Activated T-helper 1 cell treated with anti-CD3 and anti-CD28 coated beads, Interleukin-12 subunit alpha, Interleukin-12 subunit beta, Interleukin-2, Interleukin-4 antibody, amounts not matched to agents 30 ng/mL and 10 ng/mL and 1 ng/mL, durations not matched to agents 14 hours and 24 hours and 36 hours (primary cell): ENCODE measurements at regions of chr9 and their contacts with region 1.

Region 1: GRCh38 chr9:4740638-4741364 is at the start of gene AK3:
- DNase-seq: peak; percentile 81
- H3K4me3 Mint-ChIP-seq: peak within 1 kb of the TSS; percentile 89
- H3K27ac Mint-ChIP-seq: peak within 1 kb of the TSS; percentile 92
- H3K4me1 Mint-ChIP-seq: peaks cover 29% of the 10 kb centered on the region
- H3K27me3 Mint-ChIP-seq: no peaks in the 10 kb centered on the region
- total RNA-seq, gene AK3: 23.9 and 28.5 TPM in 2 replicates

Region 2: DNA sequence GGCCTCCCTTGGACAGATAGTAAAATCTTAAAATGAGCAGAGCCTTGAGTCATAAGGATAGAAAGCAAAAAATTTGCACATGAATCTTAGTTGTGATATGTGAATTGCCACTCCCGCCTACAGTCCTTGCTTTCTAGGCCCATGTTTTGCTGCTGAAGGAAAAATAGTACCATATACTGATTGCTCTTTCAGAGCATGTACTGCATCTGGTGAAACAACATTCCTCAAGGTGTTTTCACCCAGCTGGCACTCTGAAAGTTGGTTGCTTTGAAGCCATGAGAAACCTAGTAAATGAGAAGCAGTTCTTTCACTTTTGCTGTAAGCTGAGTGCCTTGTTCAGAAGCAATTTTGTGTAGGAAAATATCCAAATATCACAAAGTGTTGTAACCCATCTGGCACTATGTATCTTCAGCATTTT is 51.1 kb before region 1 on chr9:
- intact Hi-C with region 1: loop called (anchors 2 kb)
- DNase-seq: no peak
- H3K4me3 Mint-ChIP-seq: no peak overlapping the region
- H3K27ac Mint-ChIP-seq: no peak overlapping the region
- H3K4me1 Mint-ChIP-seq: peaks cover 31% of the 10 kb centered on the region
- H3K27me3 Mint-ChIP-seq: no peaks in the 10 kb centered on the region

Region 3: DNA sequence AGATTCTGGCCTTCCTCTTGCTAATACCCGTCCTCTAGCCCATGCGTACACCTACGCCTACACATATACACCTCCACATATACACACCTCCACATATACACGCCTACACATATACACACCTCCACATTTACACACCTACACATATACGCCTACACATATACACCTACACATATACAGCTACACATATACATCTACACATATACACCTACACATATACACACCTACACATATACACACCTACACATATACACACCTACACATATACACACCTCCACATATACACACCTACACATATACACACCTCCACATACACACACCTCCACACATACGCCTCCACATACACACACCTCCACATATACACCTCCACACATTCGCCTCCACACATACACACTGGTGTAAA is 27.0 kb before region 1 on chr9:
- intact Hi-C with region 1: loop called (anchors 1 kb)
- DNase-seq: no peak
- H3K4me3 Mint-ChIP-seq: no peak overlapping the region
- H3K27ac Mint-ChIP-seq: peak overlapping the region; percentile 93
- H3K4me1 Mint-ChIP-seq: peaks cover 9% of the 10 kb centered on the region
- H3K27me3 Mint-ChIP-seq: no peaks in the 10 kb centered on the region

Region 4: DNA sequence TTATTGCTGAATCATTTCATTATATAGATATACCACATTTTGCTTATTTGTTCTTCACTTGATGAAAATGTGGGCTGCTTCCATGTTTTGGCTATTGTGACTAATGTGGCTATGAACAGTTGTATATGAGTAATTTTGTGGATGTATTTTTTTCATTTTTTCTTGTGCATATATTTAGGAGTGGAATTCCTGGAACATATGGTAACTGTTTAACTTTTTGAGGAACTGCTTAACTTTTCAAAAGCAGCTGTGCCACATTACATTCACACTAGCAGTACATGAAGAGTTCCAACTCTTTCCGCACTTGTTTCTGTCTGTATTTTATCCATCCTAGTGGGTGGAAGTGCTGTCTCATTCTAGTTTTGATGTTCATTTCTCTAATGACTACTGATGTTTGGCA is 312.0 kb after region 1 on chr9:
- intact Hi-C with region 1: no loop called
- DNase-seq: no peak
- H3K4me3 Mint-ChIP-seq: no peak overlapping the region
- H3K27ac Mint-ChIP-seq: no peak overlapping the region
- H3K4me1 Mint-ChIP-seq: peaks cover 20% of the 10 kb centered on the region
- H3K27me3 Mint-ChIP-seq: no peaks in the 10 kb centered on the region